Tibial artery (tissue), 4 donors: ENCODE measurements at regions of chr9 and their contacts with region 1.

Region 1: GRCh38 chr9:121322037-121322775 is 47.8 kb downstream of the STOM start:
- DNase-seq: no peak
- H3K4me3 ChIP-seq: no peak overlapping the region
- H3K27ac ChIP-seq: peak overlapping the region; percentile 92 to 95
- H3K4me1 ChIP-seq: peaks cover 0 to 99% (median 81%) of the 10 kb centered on the region in 4 donors
- H3K27me3 ChIP-seq: no peaks in the 10 kb centered on the region
- CTCF ChIP-seq: no peak

Region 2: GRCh38 chr9:121138973-121139372 is 183.2 kb before region 1 on chr9:
- intact Hi-C with region 1: no loop called
- DNase-seq: no peak
- H3K4me3 ChIP-seq: no peak overlapping the region
- H3K27ac ChIP-seq: no peak overlapping the region
- H3K4me1 ChIP-seq: no peaks in the 10 kb centered on the region
- H3K27me3 ChIP-seq: no peaks in the 10 kb centered on the region
- CTCF ChIP-seq: no peak

Region 3: GRCh38 chr9:121278535-121279261 is 43.5 kb before region 1 on chr9:
- intact Hi-C with region 1: loop called (anchors 5 kb)
- DNase-seq: peak; percentile 84 to 88
- H3K4me3 ChIP-seq: peak overlapping the region in 1 of 2 donors; percentile 14
- H3K27ac ChIP-seq: peak overlapping the region; percentile 92 to 95
- H3K4me1 ChIP-seq: peaks cover 5 to 100% (median 98%) of the 10 kb centered on the region in 4 donors
- H3K27me3 ChIP-seq: no peaks in the 10 kb centered on the region
- CTCF ChIP-seq: peak; percentile 80 to 82

Region 4: GRCh38 chr9:121369595-121370265 is 47.5 kb after region 1 on chr9 and contains the start of gene STOM:
- intact Hi-C with region 1: loop called (anchors 5 kb)
- DNase-seq: peak; percentile 91 to 97
- H3K4me3 ChIP-seq: peak within 1 kb of the TSS; percentile 62 to 74
- H3K27ac ChIP-seq: peak within 1 kb of the TSS; percentile 93 to 98
- H3K4me1 ChIP-seq: peaks cover 0 to 74% (median 57%) of the 10 kb centered on the region in 4 donors
- H3K27me3 ChIP-seq: no peaks in the 10 kb centered on the region
- CTCF ChIP-seq: no peak